ENCODE measurements at regions of chr17 and their contacts with region 1.

Region 1: DNA sequence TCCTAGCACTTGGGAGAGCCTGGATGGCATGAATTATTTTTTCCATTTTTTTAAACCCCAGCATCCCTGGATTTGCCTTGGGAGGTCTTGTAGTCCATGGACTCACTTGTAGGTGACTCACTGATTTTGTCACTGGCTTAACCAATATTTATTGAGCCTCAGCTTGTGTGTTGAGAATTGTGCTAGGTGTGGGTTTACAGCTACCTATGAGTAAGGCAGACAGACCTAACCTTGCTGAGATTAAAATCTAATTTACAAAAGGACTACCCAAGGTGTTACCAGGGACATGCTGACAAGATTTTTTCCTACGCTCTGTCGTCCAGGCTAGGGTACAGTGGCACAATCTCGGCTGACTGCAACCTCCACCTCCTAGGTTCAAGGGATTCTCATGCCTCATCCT is 7.2 kb upstream of the KRT28 start:
- DNase-seq: no peak
- H3K27ac ChIP-seq: no peak overlapping the region
- CTCF ChIP-seq: no peak

Region 2: DNA sequence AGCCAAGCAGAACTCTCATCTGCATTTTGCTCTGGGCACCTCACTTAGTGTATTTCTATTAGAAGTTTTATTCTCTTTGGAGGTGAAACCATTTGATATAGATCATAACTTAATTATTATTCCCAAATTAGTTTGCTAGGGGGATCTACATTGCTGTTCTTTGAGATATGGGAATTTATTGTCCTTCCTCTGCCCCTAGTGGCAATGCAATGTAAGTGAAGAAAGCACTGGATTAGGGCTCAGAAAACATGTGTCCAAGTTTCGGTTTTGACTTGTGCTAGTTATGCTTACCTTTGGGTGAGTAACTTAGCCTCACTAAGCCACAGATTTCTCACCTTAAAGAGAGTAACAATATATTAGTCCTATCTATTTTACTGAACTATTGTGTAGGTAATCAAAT is 156.9 kb after region 1 on chr17:
- CTCF ChIA-PET with region 1: no interaction called
- POLR2A ChIA-PET with region 1: no interaction called
- DNase-seq: peak; percentile 41
- H3K27ac ChIP-seq: no peak overlapping the region
- CTCF ChIP-seq: peak; percentile 60

Region 3: DNA sequence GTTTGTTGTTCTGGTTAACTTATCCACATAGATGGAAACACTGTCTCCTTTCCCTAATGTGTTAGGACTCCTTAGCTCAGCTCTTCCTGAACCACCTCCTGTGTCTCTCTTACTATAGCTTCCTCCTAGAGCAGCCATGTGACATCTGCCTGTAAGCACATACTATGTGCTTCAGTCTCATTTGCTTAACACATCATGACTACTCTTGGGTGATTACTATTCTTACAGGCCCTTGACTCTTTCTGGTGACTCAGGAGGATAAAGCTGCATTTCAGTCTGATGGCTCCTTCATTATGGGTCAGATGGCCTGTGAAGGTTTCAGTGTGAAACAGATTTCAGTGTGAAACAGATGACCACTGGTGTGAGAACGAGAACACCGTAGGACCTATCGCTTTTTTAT is 371.4 kb after region 1 on chr17:
- CTCF ChIA-PET with region 1: no interaction called
- POLR2A ChIA-PET with region 1: no interaction called
- DNase-seq: no peak
- H3K27ac ChIP-seq: no peak overlapping the region
- CTCF ChIP-seq: no peak

Region 4: GRCh38 chr17:41322094-41322902 is 515.4 kb after region 1 on chr17:
- CTCF ChIA-PET with region 1: interaction called, 10 read pairs
- POLR2A ChIA-PET with region 1: no interaction called
- DNase-seq: peak; percentile 40
- H3K27ac ChIP-seq: peak overlapping the region; percentile 32
- CTCF ChIP-seq: peak; percentile 89